Endothelial cell of umbilical vein (primary cell): ENCODE measurements at regions of chr14 and their contacts with region 1.

Region 1: DNA sequence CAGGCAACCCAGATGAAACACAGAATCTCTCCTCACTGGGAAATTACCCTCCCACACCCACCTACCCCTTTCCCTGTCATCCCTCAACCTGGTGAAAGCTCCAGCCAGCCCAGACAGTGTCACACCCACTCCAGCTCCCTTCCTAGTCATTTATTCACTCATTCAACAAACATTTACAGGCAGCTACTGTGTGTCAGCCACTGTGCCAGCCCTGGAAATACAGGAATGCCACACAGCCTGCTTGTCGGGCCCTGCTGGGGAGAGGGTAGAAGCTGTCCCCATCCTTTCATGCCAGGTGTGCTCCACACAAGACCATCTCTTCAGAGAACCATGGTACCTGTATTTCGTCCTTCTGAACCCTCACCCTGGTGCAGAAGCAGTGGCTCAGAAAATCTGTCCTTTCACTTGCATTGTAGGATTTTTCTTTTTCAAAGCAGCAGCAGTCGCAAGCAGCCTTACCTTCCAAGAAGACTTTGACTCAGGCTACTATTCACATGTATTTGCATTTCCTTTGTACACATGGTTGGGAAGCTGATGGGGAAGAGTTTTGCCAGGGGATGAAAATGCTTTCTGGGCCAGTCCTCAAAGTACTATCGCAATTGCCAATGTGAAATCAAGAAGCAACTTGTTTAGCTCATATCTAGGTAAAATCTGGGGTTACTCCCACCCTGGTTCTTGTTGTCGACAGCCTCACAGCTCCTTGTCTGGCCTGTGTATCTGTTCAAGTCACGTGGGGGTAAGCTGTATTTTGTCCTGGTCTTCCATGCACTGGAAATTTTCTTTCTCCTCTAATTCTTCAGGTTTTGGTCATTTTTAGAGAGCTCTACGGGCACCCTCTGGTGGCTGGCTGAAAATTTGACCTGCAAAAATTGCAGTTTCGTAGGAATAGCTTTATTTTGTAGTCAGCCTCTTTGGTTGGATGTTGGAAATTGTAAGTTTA is 147.4 kb upstream of the EGLN3 start:
- DNase-seq: peak; percentile 43
- H3K4me3 ChIP-seq: no peak overlapping the region
- H3K27ac ChIP-seq: no peak overlapping the region
- H3K4me1 ChIP-seq: no peaks in the 10 kb centered on the region
- H3K27me3 ChIP-seq: no peaks in the 10 kb centered on the region
- CTCF ChIP-seq: peak; percentile 44 to 46
- POLR2A ChIP-seq: no peak

Region 2: DNA sequence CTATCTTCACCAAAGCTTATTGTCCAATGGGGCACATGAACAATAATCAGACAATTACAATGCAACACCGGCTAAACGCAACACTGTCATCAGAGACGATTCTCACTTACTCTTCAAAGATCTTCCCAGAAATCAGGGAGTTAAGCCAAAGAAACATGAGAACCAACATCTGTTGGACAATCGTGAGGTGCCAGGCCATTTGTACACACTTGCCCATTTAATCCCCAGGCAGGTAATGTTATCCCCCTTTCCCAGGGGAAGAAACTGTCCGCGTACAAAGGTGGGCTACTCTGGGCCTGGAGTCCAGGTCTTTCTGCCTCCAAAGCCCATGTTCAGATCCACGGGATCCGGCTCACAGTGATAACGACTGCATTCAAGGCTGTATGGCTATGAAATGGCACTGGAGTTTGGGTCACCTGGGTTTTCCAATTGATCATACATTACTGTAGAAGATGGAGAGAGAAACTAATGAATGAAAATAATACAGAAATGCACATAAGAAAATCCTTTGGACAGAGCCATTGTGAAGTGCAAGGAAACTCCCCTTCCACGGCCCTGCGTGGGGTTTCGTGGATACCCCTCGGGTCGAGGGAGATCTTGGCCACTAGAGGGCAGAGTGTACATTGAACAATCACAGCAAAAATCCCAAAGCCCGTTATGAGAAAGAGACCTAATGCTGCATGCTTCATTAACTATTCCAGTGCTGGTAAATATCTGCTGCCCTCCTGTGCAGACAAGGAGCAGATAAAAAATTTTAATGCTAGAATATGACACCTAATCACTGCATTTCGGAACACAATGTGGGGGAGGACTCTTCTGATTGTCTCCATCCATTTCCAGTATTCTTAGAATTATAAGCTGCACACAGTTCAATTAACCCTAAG is 258.9 kb before region 1 on chr14:
- CTCF ChIA-PET with region 1: interaction called, 407 read pairs
- POLR2A ChIA-PET with region 1: no interaction called
- dilution Hi-C with region 1: no loop called
- intact Hi-C with region 1: loop called (anchors 1 kb)
- DNase-seq: peak; percentile 37
- H3K4me3 ChIP-seq: no peak overlapping the region
- H3K27ac ChIP-seq: no peak overlapping the region
- H3K4me1 ChIP-seq: no peaks in the 10 kb centered on the region
- H3K27me3 ChIP-seq: peaks cover 1 to 4% of the 10 kb centered on the region in 2 experiments
- CTCF ChIP-seq: peak; percentile 72 to 77
- POLR2A ChIP-seq: no peak

Region 3: GRCh38 chr14:33855672-33856071 is 242.6 kb before region 1 on chr14:
- CTCF ChIA-PET with region 1: interaction called, 244 read pairs
- POLR2A ChIA-PET with region 1: no interaction called
- dilution Hi-C with region 1: no loop called
- intact Hi-C with region 1: no loop called
- DNase-seq: no peak
- H3K4me3 ChIP-seq: no peak overlapping the region
- H3K27ac ChIP-seq: no peak overlapping the region
- H3K4me1 ChIP-seq: no peaks in the 10 kb centered on the region
- H3K27me3 ChIP-seq: peaks cover 0 to 3% of the 10 kb centered on the region in 2 experiments
- CTCF ChIP-seq: no peak
- POLR2A ChIP-seq: no peak

Region 4: GRCh38 chr14:33866425-33867088 is 231.8 kb before region 1 on chr14:
- CTCF ChIA-PET with region 1: no interaction called
- POLR2A ChIA-PET with region 1: no interaction called
- dilution Hi-C with region 1: no loop called
- intact Hi-C with region 1: no loop called
- DNase-seq: no peak
- H3K4me3 ChIP-seq: no peak overlapping the region
- H3K27ac ChIP-seq: no peak overlapping the region
- H3K4me1 ChIP-seq: no peaks in the 10 kb centered on the region
- H3K27me3 ChIP-seq: no peaks in the 10 kb centered on the region
- CTCF ChIP-seq: no peak
- POLR2A ChIP-seq: no peak

Region 5: DNA sequence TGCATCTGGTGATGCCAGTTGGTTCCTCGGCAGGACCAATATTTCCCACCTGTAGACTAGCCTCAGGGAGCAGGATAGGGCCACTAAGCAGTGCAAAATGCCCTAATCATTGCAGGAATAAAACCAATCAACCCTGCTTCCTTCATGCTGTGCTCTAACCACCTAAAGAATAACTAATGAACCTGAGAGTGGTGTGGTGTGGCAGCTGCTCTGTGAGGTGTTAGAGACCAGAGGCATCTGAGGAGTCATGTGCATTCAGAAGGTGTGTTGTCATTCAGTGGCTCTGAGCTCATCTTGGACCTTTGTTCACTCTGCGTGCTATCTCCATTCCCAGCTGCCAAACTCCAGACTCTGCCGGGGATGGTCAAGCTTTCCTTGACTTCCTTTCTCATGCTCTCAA is 10.8 kb before region 1 on chr14:
- CTCF ChIA-PET with region 1: interaction called, 16 read pairs
- POLR2A ChIA-PET with region 1: no interaction called
- dilution Hi-C with region 1: no loop called
- intact Hi-C with region 1: no loop called
- DNase-seq: no peak
- H3K4me3 ChIP-seq: no peak overlapping the region
- H3K27ac ChIP-seq: no peak overlapping the region
- H3K4me1 ChIP-seq: no peaks in the 10 kb centered on the region
- H3K27me3 ChIP-seq: peaks cover 0 to under 1% of the 10 kb centered on the region in 2 experiments
- CTCF ChIP-seq: no peak
- POLR2A ChIP-seq: no peak

Region 6: GRCh38 chr14:34300882-34301734 is 202.8 kb after region 1 on chr14:
- CTCF ChIA-PET with region 1: interaction called, 13 read pairs
- POLR2A ChIA-PET with region 1: no interaction called
- dilution Hi-C with region 1: no loop called
- intact Hi-C with region 1: loop called (anchors 1 kb)
- DNase-seq: peak; percentile 49
- H3K4me3 ChIP-seq: no peak overlapping the region
- H3K27ac ChIP-seq: no peak overlapping the region
- H3K4me1 ChIP-seq: no peaks in the 10 kb centered on the region
- H3K27me3 ChIP-seq: peaks cover 0 to 2% of the 10 kb centered on the region in 2 experiments
- CTCF ChIP-seq: peak; percentile 43 to 45
- POLR2A ChIP-seq: no peak